Common myeloid progenitor, CD34-positive (primary cell): ENCODE measurements at regions of chr18 and their contacts with region 1.

Region 1: DNA sequence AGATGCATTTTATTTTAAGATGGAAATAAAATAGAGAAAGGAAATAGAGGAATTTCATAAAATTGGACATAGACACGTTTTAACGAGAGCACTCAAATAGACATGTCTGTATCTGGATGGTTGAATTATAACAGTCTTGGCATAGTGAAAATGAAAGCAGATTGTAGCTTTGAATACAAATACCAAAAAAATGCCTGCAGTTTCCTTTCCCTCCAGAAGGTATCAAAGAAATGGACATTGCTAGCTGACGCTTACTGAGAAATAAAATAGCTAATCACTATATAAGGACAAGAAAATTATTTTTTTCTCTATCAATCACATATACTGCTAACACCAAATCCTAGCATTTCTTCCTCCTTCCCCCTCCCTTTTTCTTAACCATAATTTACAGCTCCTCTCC is 11.4 kb upstream of the MAPRE2 start:
- DNase-seq: peak in 2 of 3 donors; percentile 68 to 77
- H3K4me3 ChIP-seq: peak overlapping the region in 6 of 7 experiments; percentile 7 to 72 (median 50)
- H3K27ac ChIP-seq: peak overlapping the region in 1 of 2 experiments; percentile 69
- H3K4me1 ChIP-seq: peaks cover 12 to 32% (median 15%) of the 10 kb centered on the region in 4 experiments
- H3K27me3 ChIP-seq: no peaks in the 10 kb centered on the region

Region 2: DNA sequence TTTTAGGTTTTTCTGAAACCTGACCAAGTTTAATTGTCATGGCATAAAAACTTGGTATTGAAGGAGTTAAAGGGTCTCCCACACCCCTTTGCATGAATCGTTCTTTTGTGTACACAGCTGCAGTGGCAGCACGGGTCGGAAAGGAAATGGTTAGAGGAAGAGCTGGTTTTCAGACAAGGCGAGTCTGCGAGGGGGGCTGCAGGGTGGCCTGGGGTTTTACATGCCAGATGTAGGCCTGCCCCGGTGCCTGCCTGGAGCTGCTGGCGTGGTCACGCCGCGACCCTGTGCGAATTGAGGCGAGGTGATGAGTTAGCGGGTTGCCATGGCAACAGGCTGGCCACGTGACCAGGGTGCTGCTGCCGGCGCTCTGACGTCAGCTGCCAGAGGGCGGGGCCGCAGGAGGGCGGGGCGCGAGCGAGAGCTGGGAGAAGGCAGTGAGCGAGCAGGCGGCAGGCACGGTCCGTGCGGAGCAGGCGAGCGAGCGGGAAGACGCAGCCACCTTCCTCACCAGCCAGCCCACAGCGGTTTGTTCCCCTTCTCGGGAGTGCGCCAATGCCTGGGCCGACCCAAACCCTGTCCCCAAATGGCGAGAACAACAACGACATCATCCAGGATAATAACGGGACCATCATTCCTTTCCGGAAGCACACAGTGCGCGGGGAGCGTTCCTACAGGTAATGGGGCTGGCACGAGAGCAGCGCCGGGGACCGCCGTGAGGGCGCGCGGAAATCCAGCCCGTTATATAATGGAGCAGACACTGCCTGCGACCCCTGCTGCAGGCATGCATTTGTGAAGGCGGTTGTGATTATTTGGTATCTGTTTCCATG is 11.4 kb after region 1 on chr18 and contains the start of gene MAPRE2:
- CTCF ChIA-PET with region 1: interaction called, 127 read pairs
- POLR2A ChIA-PET with region 1: interaction called, 16 read pairs
- DNase-seq: peak; percentile 100
- H3K4me3 ChIP-seq: peak within 1 kb of the TSS; percentile 65 to 99 (median 98)
- H3K27ac ChIP-seq: peak within 1 kb of the TSS; percentile 91 to 97
- H3K4me1 ChIP-seq: peaks cover 55 to 82% (median 74%) of the 10 kb centered on the region in 4 experiments
- H3K27me3 ChIP-seq: no peaks in the 10 kb centered on the region

Region 3: DNA sequence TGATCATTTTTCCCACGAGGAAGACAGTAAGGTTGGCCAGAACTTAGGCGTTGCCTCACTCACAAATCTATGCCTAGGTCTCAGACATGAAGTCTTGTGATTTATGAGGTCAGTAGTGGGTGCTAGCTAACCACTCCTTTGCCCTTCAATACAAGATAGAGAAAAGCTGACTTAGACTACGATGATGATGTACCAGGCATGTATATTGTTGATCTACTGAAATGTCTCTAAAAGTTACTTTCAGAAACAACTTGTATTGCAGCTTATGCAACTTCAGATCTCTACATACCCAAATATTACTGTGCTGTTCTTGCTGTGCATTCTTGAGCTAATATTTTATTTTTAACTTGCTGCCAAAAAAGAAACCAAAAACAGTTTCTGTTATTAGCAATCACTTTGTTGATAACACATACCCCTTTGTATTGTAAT is 42.1 kb after region 1 on chr18:
- CTCF ChIA-PET with region 1: interaction called, 36 read pairs
- POLR2A ChIA-PET with region 1: no interaction called
- DNase-seq: no peak
- H3K4me3 ChIP-seq: no peak overlapping the region
- H3K27ac ChIP-seq: peak overlapping the region in 1 of 2 experiments; percentile 44
- H3K4me1 ChIP-seq: peaks cover 8 to 34% (median 20%) of the 10 kb centered on the region in 4 experiments
- H3K27me3 ChIP-seq: no peaks in the 10 kb centered on the region

Region 4: GRCh38 chr18:35122586-35123224 is 92.9 kb after region 1 on chr18:
- CTCF ChIA-PET with region 1: interaction called, 82 read pairs
- POLR2A ChIA-PET with region 1: no interaction called
- DNase-seq: peak in 2 of 3 donors; percentile 75 to 79
- H3K4me3 ChIP-seq: peak overlapping the region in 1 of 7 experiments; percentile 0
- H3K27ac ChIP-seq: peak overlapping the region in 1 of 2 experiments; percentile 54
- H3K4me1 ChIP-seq: peaks cover 0 to 36% (median 18%) of the 10 kb centered on the region in 4 experiments
- H3K27me3 ChIP-seq: no peaks in the 10 kb centered on the region

Region 5: DNA sequence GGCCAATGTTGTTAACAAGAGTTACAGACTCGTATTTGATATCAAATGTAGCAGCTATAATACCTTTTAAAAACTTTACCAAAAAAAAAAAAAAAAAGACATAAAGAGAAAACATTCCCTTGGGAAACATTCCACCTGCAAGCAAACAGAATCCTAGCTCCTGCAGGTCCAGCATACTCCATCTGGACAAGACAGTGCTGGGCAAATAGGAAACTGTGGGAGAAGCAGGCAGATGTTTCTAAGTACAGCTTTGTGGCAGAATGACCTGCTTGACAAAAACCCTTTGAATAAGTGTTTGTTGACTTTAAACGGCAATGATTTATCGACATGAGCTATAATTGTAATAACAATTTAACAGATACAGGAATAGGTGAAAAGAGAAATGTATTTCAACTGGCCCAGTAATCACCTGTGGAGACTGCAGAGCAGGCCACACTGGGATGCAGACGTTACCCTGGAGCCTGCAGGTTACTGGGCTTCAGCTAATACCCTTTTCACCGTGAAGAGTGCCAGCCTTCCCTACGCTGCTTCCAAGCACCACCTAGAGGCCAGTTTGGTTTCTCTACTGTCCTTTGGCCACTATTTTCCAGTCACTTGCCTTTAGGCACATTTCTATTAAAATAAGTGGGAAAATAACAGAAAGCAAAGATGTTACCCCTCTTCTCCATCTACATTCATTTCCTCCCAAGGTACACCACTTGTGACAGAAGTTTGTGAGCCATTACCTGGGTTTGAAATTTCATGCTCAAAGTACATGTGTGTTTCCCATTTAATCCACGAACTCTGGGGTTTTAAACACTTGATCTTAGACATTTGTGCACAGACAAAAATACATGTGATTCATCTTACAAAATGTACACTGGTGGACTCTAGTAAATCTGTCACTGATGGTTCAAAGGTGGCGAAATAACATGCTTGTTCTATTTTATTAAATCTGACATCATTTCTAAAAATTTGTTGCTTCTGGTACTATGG is 114.1 kb after region 1 on chr18:
- CTCF ChIA-PET with region 1: interaction called, 138 read pairs
- POLR2A ChIA-PET with region 1: no interaction called
- DNase-seq: peak; percentile 64 to 77 (median 74)
- H3K4me3 ChIP-seq: no peak overlapping the region
- H3K27ac ChIP-seq: no peak overlapping the region
- H3K4me1 ChIP-seq: peaks cover 0 to 19% (median 12%) of the 10 kb centered on the region in 4 experiments
- H3K27me3 ChIP-seq: no peaks in the 10 kb centered on the region